ENCODE measurements at regions of chr3 and their contacts with region 1.

Region 1: DNA sequence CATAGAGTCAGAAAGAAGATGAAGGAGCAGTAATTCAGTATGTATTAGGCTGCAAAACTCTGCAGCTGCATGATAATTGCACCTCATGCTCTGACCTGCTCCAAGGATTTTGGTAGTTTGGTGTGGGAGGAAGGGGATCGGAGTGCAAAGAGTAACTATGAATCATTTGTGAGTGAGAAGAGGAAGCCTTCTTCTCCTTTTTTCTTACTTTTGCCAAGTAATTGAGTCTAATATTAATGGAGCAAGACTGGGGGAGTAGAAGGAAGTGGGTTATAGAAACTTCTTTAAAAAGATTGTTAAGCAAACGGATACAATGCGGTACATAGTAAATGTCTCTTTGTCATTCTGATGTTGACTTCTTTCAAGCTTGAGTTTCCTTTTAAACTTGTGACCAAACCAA is 276.5 kb downstream of the EDEM1 start:
- DNase-seq: peak; percentile 66 to 73 (median 72)
- H3K4me3 ChIP-seq: peak overlapping the region in 1 of 3 experiments; percentile 49
- H3K4me3 Mint-ChIP-seq: peak overlapping the region; percentile 22 to 75
- H3K27ac ChIP-seq: peak overlapping the region in 1 of 2 donors; percentile 79
- H3K27ac Mint-ChIP-seq: peak overlapping the region; percentile 66 to 97 (median 92)
- H3K4me1 ChIP-seq: peaks cover 43 to 48% of the 10 kb centered on the region in 2 donors
- H3K4me1 Mint-ChIP-seq: peaks cover 43% of the 10 kb centered on the region
- H3K27me3 ChIP-seq: no peaks in the 10 kb centered on the region
- H3K27me3 Mint-ChIP-seq: peaks cover 0 to 1% (median 0%) of the 10 kb centered on the region in 3 donors
- CTCF ChIP-seq: no peak

Region 2: GRCh38 chr3:5657106-5657505 is 193.1 kb after region 1 on chr3:
- intact Hi-C with region 1: loop called in 1 of 2 experiments (anchors 10 kb)
- DNase-seq: peak; percentile 92 to 99 (median 98)
- H3K4me3 ChIP-seq: peak overlapping the region in 1 of 3 experiments; percentile 47
- H3K4me3 Mint-ChIP-seq: peak overlapping the region; percentile 17 to 79
- H3K27ac ChIP-seq: peak overlapping the region; percentile 25 to 91
- H3K27ac Mint-ChIP-seq: peak overlapping the region; percentile 91 to 98 (median 96)
- H3K4me1 ChIP-seq: peaks cover 23 to 28% of the 10 kb centered on the region in 2 donors
- H3K4me1 Mint-ChIP-seq: peaks cover 25% of the 10 kb centered on the region
- H3K27me3 ChIP-seq: no peaks in the 10 kb centered on the region
- H3K27me3 Mint-ChIP-seq: peaks cover 0 to 1% (median 0%) of the 10 kb centered on the region in 3 donors
- CTCF ChIP-seq: no peak